Activated B cell treated with CpG ODN at 0.5 μM for 24 hours (primary cell): ENCODE measurements at regions of chr2 and their contacts with region 1.

Region 1: DNA sequence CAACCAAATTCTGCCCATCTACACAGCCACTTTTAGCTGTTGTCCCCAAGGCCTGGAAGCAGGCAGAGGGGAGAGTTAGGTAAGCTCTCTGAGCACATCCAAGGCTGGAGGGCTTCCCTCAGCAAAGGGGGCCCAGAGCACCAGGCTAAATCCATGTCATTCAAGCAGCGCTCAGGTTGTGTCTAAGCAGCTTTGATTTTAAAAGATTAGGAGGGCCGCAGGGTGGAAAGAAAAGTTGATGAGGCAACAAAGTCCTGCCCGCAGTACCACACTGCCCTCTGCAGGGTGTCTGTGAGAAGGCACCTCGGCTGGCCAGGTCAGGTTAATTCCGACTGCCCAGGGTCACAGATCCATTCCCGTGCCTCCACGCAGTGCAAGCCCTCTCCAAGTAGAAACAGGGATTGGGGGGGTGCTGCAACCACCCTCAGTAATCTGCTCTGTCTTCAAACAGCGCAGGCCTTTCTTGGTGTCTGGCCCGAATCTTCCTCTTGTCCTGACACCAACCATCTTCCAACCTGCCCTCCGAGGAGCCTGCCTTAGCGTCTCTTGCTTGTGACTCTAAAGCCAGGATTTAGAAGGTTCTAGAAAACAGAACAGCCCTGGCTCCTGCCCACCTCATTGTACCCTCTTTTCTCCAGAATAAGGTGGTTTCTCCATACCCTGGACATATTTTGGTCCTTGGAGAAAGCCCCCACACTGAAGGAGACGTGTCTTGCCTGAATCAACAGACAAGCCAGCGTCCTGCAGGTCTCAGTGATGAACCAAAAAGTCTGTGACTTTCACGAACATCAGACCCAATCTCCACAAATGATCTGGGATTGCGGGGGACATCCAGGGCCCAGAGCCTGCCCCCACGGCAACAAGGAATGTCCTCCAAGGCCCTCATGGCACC is 289.2 kb downstream of the TNS1 start:
- DNase-seq: peak; percentile 47
- ATAC-seq: peak; percentile 70
- H3K4me3 Mint-ChIP-seq: no peak overlapping the region
- H3K27ac Mint-ChIP-seq: no peak overlapping the region
- H3K4me1 Mint-ChIP-seq: no peaks in the 10 kb centered on the region
- H3K27me3 Mint-ChIP-seq: peaks cover 6% of the 10 kb centered on the region
- CTCF ChIP-seq: no peak

Region 2: DNA sequence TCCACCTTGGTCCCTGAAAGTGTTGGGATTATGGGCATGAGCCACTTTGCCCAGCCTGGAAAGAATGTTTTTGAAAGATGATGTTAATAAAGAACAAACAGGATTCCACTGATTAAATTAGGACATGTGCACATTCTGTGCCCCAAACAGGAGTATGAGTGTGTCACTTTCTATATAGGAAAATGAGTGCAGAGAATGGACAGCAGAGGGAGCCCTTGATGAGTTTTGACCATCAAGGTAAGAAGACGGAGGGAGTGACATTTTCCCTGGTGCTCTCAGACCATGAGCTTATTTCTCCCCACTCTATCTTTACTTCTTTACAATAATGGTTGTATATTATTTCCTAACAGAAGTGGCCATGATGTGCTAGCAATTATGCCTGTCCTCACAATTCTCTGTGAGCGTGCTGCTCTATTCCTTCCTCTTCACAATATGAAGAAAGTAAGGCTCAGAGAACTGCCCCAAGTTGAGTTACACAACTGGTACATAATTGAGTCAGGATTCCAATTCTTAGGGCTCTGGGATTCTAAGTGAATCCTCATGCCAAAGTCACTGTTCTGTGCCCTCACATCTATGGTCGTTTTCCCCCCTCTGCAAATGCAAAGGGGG is 1194.4 kb before region 1 on chr2:
- CTCF ChIA-PET with region 1: interaction called, 10 read pairs
- POLR2A ChIA-PET with region 1: no interaction called
- intact Hi-C with region 1: loop called (anchors 1 kb)
- DNase-seq: no peak
- ATAC-seq: peak; percentile 56
- H3K4me3 Mint-ChIP-seq: no peak overlapping the region
- H3K27ac Mint-ChIP-seq: no peak overlapping the region
- H3K4me1 Mint-ChIP-seq: no peaks in the 10 kb centered on the region
- H3K27me3 Mint-ChIP-seq: no peaks in the 10 kb centered on the region
- CTCF ChIP-seq: no peak

Region 3: GRCh38 chr2:216680951-216681629 is 1032.6 kb before region 1 on chr2:
- CTCF ChIA-PET with region 1: interaction called, 12 read pairs
- POLR2A ChIA-PET with region 1: no interaction called
- intact Hi-C with region 1: loop called (anchors 1 kb)
- DNase-seq: no peak
- ATAC-seq: no peak
- H3K4me3 Mint-ChIP-seq: no peak overlapping the region
- H3K27ac Mint-ChIP-seq: no peak overlapping the region
- H3K4me1 Mint-ChIP-seq: no peaks in the 10 kb centered on the region
- H3K27me3 Mint-ChIP-seq: peaks cover 40% of the 10 kb centered on the region
- CTCF ChIP-seq: no peak

Region 4: GRCh38 chr2:216687646-216688045 is 1026.0 kb before region 1 on chr2:
- CTCF ChIA-PET with region 1: interaction called, 12 read pairs
- POLR2A ChIA-PET with region 1: no interaction called
- intact Hi-C with region 1: loop called (anchors 1 kb)
- DNase-seq: no peak
- ATAC-seq: no peak
- H3K4me3 Mint-ChIP-seq: no peak overlapping the region
- H3K27ac Mint-ChIP-seq: no peak overlapping the region
- H3K4me1 Mint-ChIP-seq: peaks cover 12% of the 10 kb centered on the region
- H3K27me3 Mint-ChIP-seq: peaks cover 70% of the 10 kb centered on the region
- CTCF ChIP-seq: no peak

Region 5: GRCh38 chr2:216698895-216699294 is 1014.7 kb before region 1 on chr2:
- CTCF ChIA-PET with region 1: interaction called, 3 read pairs
- POLR2A ChIA-PET with region 1: no interaction called
- intact Hi-C with region 1: loop called (anchors 1 kb)
- DNase-seq: no peak
- ATAC-seq: no peak
- H3K4me3 Mint-ChIP-seq: no peak overlapping the region
- H3K27ac Mint-ChIP-seq: no peak overlapping the region
- H3K4me1 Mint-ChIP-seq: peaks cover 4% of the 10 kb centered on the region
- H3K27me3 Mint-ChIP-seq: peaks cover 33% of the 10 kb centered on the region
- CTCF ChIP-seq: no peak